Panc1 (cell line): ENCODE measurements at regions of chr1 and their contacts with region 1.

Region 1: DNA sequence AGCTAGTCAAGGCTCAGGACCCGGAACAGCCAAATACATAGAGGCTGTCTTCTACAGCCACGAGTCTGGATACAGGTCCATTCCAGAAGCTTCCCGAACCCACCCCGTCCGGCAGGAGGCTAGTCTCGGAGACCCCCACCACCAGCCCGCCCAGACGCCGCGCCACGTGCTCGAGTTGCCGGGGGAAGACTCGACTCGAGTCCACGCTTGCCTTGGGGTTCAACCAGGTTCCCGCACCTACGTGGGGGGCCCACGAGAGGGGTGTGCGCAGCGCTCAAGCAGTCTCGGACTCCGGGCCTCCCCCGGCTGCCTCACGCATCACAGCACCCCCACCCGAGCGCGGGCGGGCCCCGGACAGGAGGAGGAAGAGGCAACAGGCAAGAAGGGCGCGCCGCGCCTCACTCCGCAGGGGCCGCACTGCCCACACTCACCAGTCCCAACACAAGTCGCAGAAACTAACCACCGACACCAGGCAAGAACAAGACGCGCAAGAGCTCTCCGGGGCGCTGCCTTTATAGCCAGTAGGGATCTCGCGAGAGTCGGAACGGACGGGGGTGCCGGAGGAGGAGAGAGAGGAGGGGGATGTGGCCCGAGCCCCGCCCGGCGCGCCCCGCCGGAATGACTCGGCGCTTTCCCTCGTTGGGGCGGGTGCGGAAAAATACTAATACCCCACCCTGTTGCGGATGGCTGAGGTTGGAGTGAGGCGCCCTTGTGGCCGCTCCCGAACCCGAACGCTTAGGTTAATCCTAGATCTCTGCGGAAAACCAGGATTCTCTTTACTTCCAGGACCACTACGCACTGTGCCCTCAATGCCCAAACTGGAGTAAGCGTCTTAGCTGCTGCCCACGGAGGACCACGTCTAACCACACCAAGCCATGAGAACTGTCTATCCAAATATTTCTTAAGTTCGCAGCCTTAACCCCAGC is at the start of gene PRDX1:
- DNase-seq: peak; percentile 84
- ATAC-seq: peak; percentile 93
- H3K4me3 ChIP-seq: peak within 1 kb of the TSS; percentile 92 to 98
- H3K27ac ChIP-seq: peak within 1 kb of the TSS; percentile 99
- H3K4me1 ChIP-seq: peaks cover 21% of the 10 kb centered on the region
- H3K27me3 ChIP-seq: no peaks in the 10 kb centered on the region
- CTCF ChIP-seq: no peak
- total RNA-seq, gene PRDX1: 719 TPM

Region 2: GRCh38 chr1:45543581-45544417 is 22.1 kb after region 1 on chr1:
- CTCF ChIA-PET with region 1: interaction called, 11 read pairs
- POLR2A ChIA-PET with region 1: interaction called, 9 read pairs
- in situ Hi-C with region 1: no loop called
- intact Hi-C with region 1: no loop called
- DNase-seq: no peak
- ATAC-seq: 0 out of 2 replicates have a peak, but pooled peaks have one; percentile 23
- H3K4me3 ChIP-seq: no peak overlapping the region
- H3K27ac ChIP-seq: no peak overlapping the region
- H3K4me1 ChIP-seq: no peaks in the 10 kb centered on the region
- H3K27me3 ChIP-seq: no peaks in the 10 kb centered on the region
- CTCF ChIP-seq: no peak

Region 3: DNA sequence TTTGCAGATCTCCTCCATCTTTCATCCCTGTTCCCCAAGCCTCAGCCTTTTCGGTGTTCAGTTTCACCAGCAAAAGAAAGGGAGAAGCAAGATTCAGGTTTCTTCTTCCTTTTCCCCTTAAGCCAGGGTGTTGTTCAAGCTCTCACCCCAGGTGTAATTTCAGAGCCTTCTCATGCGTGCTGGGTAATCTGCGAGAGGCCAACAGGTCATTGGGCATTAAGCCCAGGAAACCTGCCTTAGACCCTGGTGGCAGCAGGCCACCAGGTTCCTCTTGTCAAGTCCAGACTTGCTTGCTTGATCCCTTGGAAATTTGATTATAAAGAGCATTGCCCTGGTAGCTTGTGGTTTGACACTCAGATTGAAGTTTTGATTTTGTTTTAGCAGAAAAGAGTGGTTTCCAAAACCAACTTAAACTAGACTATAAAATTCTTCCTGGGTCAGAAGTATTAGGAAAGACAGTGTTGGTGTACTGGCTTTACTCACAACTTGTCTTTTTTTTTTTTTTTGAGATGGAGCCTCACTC is 35.8 kb after region 1 on chr1:
- CTCF ChIA-PET with region 1: no interaction called
- POLR2A ChIA-PET with region 1: interaction called, 3 read pairs
- in situ Hi-C with region 1: no loop called
- intact Hi-C with region 1: loop called (anchors 5 kb)
- DNase-seq: no peak
- ATAC-seq: no peak; the same call in 1 of the 2 replicates
- H3K4me3 ChIP-seq: no peak overlapping the region
- H3K27ac ChIP-seq: no peak overlapping the region
- H3K4me1 ChIP-seq: peaks cover 8% of the 10 kb centered on the region; the same call in 1 of the 2 replicates
- H3K27me3 ChIP-seq: no peaks in the 10 kb centered on the region
- CTCF ChIP-seq: no peak

Region 4: DNA sequence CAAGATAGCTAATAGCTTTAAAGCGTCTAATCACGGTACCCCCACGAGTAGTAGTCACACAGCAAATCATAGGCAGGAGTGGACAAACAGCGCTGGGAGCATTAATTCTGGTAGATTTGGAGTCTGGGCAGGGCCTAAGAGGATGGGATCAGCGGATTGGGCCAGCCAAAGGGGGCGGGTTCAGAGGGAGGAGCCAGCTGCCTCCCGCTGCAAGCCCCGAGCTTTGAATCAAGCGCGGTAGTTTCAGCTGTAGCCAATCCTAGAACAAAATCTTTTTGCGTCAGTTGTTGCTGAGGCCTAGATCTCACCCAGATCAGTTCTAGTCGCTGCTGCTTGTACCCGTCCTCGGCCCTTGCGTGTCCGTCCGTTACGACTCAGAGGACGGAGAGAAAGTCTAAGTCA is 61.6 kb after region 1 on chr1:
- CTCF ChIA-PET with region 1: no interaction called
- POLR2A ChIA-PET with region 1: interaction called, 10 read pairs
- in situ Hi-C with region 1: no loop called
- intact Hi-C with region 1: no loop called
- DNase-seq: peak; percentile 97
- ATAC-seq: peak; percentile 91
- H3K4me3 ChIP-seq: peak overlapping the region; percentile 89 to 98
- H3K27ac ChIP-seq: peak overlapping the region; percentile 90
- H3K4me1 ChIP-seq: peaks cover 8% of the 10 kb centered on the region; the same call in 1 of the 2 replicates
- H3K27me3 ChIP-seq: no peaks in the 10 kb centered on the region
- CTCF ChIP-seq: no peak

Region 5: DNA sequence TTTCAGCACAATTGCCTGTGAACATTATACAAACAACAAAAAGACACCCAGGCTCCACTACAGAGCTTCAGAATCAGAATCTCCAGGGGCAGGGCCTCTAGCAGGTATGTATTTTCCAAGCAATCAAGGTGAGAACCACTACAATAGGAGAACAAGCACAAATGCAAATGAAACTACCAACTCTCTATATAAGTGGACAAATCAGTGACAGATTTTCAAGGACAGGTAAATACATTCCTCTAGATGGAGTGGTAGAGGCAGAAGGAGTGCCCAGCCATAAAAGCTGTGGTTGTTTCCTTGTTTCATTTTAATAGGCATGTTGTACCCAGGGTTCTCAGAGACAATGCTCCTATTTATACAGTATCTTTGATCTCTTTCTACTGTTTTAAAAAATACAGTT is 122.3 kb after region 1 on chr1:
- CTCF ChIA-PET with region 1: no interaction called
- POLR2A ChIA-PET with region 1: interaction called, 10 read pairs
- in situ Hi-C with region 1: no loop called
- intact Hi-C with region 1: no loop called
- DNase-seq: no peak
- ATAC-seq: peak; percentile 69
- H3K4me3 ChIP-seq: no peak overlapping the region
- H3K27ac ChIP-seq: no peak overlapping the region
- H3K4me1 ChIP-seq: no peaks in the 10 kb centered on the region
- H3K27me3 ChIP-seq: no peaks in the 10 kb centered on the region
- CTCF ChIP-seq: peak; percentile 29; the same call in 1 of the 2 replicates